B cell (primary cell): ENCODE measurements at regions of chr15 and their contacts with region 1.

Region 1: DNA sequence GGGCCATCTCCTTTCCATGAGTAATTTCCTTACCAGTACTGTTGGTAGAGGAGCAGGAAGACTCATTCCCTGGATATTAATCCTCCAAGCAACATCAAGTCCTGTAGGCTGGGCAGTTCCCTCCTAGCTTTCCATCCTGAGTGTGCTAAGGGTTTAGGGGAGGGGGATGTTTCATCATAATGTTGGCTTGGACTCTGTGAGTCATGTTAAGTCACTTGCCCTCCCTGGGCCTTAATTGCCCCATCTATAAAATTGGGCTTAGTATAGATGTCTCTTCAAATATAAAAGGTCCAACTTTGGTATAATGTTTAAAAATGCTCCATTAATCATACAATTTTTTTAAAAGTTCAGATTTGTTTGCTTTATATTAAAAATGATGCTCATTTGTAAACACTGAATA is 52.7 kb downstream of the TLE3 start:
- DNase-seq: no peak
- ATAC-seq: no peak
- H3K4me3 ChIP-seq: no peak overlapping the region
- H3K4me3 Mint-ChIP-seq: no peak overlapping the region
- H3K27ac ChIP-seq: no peak overlapping the region
- H3K27ac Mint-ChIP-seq: no peak overlapping the region
- H3K4me1 ChIP-seq: peaks cover 0 to 5% of the 10 kb centered on the region in 2 donors
- H3K4me1 Mint-ChIP-seq: peaks cover 25% of the 10 kb centered on the region
- H3K27me3 ChIP-seq: no peaks in the 10 kb centered on the region
- H3K27me3 Mint-ChIP-seq: no peaks in the 10 kb centered on the region
- CTCF ChIP-seq: no peak

Region 2: GRCh38 chr15:69489073-69489571 is 555.9 kb before region 1 on chr15:
- CTCF ChIA-PET with region 1: no interaction called
- POLR2A ChIA-PET with region 1: interaction called, 10 read pairs
- intact Hi-C with region 1: no loop called
- DNase-seq: no peak
- ATAC-seq: no peak
- H3K4me3 ChIP-seq: no peak overlapping the region
- H3K4me3 Mint-ChIP-seq: no peak overlapping the region
- H3K27ac ChIP-seq: no peak overlapping the region
- H3K27ac Mint-ChIP-seq: no peak overlapping the region
- H3K4me1 ChIP-seq: no peaks in the 10 kb centered on the region
- H3K4me1 Mint-ChIP-seq: no peaks in the 10 kb centered on the region
- H3K27me3 ChIP-seq: peaks cover 0 to 3% (median 0%) of the 10 kb centered on the region in 4 experiments
- H3K27me3 Mint-ChIP-seq: peaks cover 34% of the 10 kb centered on the region
- CTCF ChIP-seq: no peak

Region 3: DNA sequence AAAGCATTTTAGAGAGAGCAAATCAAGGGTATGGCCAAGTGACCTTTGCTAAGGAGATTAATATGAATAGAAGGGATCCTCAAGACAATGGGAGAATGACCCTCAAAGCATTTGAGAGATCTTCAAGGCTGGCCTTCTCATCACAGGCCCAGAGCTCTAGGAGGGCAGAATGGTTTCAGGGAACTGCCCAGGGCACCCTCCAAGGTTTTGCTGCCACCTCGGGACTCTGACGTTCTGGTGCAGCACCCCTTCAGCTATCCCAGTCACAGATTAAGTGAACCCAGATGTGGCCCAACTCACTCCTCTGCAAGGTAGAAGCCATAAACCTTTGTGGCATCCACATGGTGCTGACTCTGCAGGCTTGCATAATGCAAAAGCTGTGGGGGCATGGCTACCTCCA is 156.6 kb before region 1 on chr15:
- CTCF ChIA-PET with region 1: no interaction called
- POLR2A ChIA-PET with region 1: no interaction called
- intact Hi-C with region 1: no loop called
- DNase-seq: no peak
- ATAC-seq: no peak
- H3K4me3 ChIP-seq: no peak overlapping the region
- H3K4me3 Mint-ChIP-seq: no peak overlapping the region
- H3K27ac ChIP-seq: no peak overlapping the region
- H3K27ac Mint-ChIP-seq: no peak overlapping the region
- H3K4me1 ChIP-seq: no peaks in the 10 kb centered on the region
- H3K4me1 Mint-ChIP-seq: peaks cover 5% of the 10 kb centered on the region
- H3K27me3 ChIP-seq: peaks cover 0 to 15% (median 2%) of the 10 kb centered on the region in 4 experiments
- H3K27me3 Mint-ChIP-seq: peaks cover 19% of the 10 kb centered on the region
- CTCF ChIP-seq: no peak

Region 4: GRCh38 chr15:70014860-70015490 is 30.1 kb before region 1 on chr15:
- CTCF ChIA-PET with region 1: interaction called, 6 read pairs
- POLR2A ChIA-PET with region 1: no interaction called
- intact Hi-C with region 1: loop called (anchors 5 kb)
- DNase-seq: peak; percentile 72
- ATAC-seq: peak; percentile 76
- H3K4me3 ChIP-seq: peak overlapping the region in 1 of 5 experiments; percentile 37
- H3K4me3 Mint-ChIP-seq: peak overlapping the region; percentile 76
- H3K27ac ChIP-seq: peak overlapping the region; percentile 81 to 84
- H3K27ac Mint-ChIP-seq: peak overlapping the region; percentile 97
- H3K4me1 ChIP-seq: peaks cover 69 to 77% of the 10 kb centered on the region in 2 donors
- H3K4me1 Mint-ChIP-seq: peaks cover 79% of the 10 kb centered on the region
- H3K27me3 ChIP-seq: no peaks in the 10 kb centered on the region
- H3K27me3 Mint-ChIP-seq: no peaks in the 10 kb centered on the region
- CTCF ChIP-seq: no peak

Region 5: GRCh38 chr15:70025413-70026296 is 19.4 kb before region 1 on chr15:
- CTCF ChIA-PET with region 1: no interaction called
- POLR2A ChIA-PET with region 1: no interaction called
- intact Hi-C with region 1: no loop called
- DNase-seq: no peak
- ATAC-seq: no peak
- H3K4me3 ChIP-seq: no peak overlapping the region
- H3K4me3 Mint-ChIP-seq: no peak overlapping the region
- H3K27ac ChIP-seq: no peak overlapping the region
- H3K27ac Mint-ChIP-seq: peak overlapping the region; percentile 53
- H3K4me1 ChIP-seq: peaks cover 23 to 34% of the 10 kb centered on the region in 2 donors
- H3K4me1 Mint-ChIP-seq: peaks cover 34% of the 10 kb centered on the region
- H3K27me3 ChIP-seq: peaks cover 0 to 6% (median 0%) of the 10 kb centered on the region in 4 experiments
- H3K27me3 Mint-ChIP-seq: peaks cover 3% of the 10 kb centered on the region
- CTCF ChIP-seq: no peak